Activated naive CD4-positive, alpha-beta T cell treated with anti-CD3 and anti-CD28 coated beads for 36 hours (primary cell): ENCODE measurements at regions of chr18 and their contacts with region 1.

Region 1: GRCh38 chr18:74081966-74082741 is 65.5 kb downstream of the FBXO15 start:
- DNase-seq: peak; percentile 82
- H3K4me3 Mint-ChIP-seq: peak overlapping the region; percentile 71
- H3K27ac Mint-ChIP-seq: peak overlapping the region; percentile 87
- H3K4me1 Mint-ChIP-seq: peaks cover 16% of the 10 kb centered on the region
- H3K27me3 Mint-ChIP-seq: no peaks in the 10 kb centered on the region

Region 2: GRCh38 chr18:73785271-73785670 is 296.9 kb before region 1 on chr18:
- CTCF ChIA-PET with region 1: no interaction called
- intact Hi-C with region 1: no loop called
- DNase-seq: no peak
- H3K4me3 Mint-ChIP-seq: no peak overlapping the region
- H3K27ac Mint-ChIP-seq: no peak overlapping the region
- H3K4me1 Mint-ChIP-seq: no peaks in the 10 kb centered on the region
- H3K27me3 Mint-ChIP-seq: peaks cover 5% of the 10 kb centered on the region

Region 3: DNA sequence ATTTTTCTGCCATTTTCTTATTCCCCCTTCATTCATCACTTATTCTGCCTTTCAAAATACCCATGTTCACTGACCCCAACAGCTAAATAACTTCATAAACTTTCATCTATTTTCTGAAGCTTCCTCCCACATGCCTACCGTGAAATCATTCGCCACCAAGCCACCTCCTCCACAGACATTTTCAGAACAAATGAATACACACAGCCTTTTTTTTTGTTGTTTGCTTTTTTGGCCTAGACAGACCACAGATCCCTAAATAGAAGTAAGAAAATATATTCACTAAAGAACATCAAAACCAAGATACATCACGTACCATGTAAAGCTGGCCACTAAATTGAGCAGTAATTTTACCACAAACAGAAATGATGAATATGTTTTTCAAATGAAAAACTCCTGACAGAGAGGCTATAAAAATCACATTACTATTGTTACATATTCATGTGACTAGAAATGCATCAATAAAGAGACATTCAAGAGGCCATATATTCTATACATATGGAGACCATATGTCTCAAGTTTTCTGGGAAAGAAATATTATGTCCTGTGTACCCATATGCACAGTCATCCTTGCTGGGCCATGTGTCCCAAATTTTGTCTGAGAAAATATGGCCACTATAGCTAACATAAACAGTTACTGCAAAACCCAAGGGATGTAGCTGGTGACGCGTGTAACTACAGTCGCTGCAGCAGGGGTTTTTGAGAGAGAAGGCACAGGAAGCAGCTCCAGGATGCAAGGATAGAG is 134.8 kb before region 1 on chr18:
- CTCF ChIA-PET with region 1: no interaction called
- intact Hi-C with region 1: no loop called
- DNase-seq: no peak
- H3K4me3 Mint-ChIP-seq: no peak overlapping the region
- H3K27ac Mint-ChIP-seq: no peak overlapping the region
- H3K4me1 Mint-ChIP-seq: peaks cover 2% of the 10 kb centered on the region
- H3K27me3 Mint-ChIP-seq: no peaks in the 10 kb centered on the region

Region 4: GRCh38 chr18:74063023-74063422 is 19.1 kb before region 1 on chr18:
- CTCF ChIA-PET with region 1: interaction called, 54 read pairs
- intact Hi-C with region 1: loop called (anchors 1 kb)
- DNase-seq: peak; percentile 75
- H3K4me3 Mint-ChIP-seq: peak overlapping the region; percentile 3
- H3K27ac Mint-ChIP-seq: peak overlapping the region; percentile 88
- H3K4me1 Mint-ChIP-seq: peaks cover 40% of the 10 kb centered on the region
- H3K27me3 Mint-ChIP-seq: no peaks in the 10 kb centered on the region

Region 5: DNA sequence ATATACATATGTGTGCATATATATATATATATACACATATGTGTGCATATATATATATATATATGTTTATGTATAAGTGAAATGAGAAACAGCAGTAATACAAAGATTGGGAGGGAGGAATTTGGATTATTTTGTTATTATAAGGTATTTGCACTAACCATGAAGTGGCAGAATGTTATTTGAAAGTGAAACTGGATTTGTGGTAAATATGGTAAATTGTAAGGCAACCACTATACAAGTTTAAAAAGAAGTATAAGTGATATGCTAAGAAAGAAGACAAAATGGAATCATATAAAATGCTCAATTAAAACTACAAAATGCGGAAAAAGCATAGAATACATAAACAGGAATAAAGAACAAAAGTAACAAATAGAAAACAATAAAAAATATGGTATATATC is 28.0 kb after region 1 on chr18:
- CTCF ChIA-PET with region 1: interaction called, 46 read pairs
- intact Hi-C with region 1: no loop called
- DNase-seq: no peak
- H3K4me3 Mint-ChIP-seq: no peak overlapping the region
- H3K27ac Mint-ChIP-seq: no peak overlapping the region
- H3K4me1 Mint-ChIP-seq: peaks cover 24% of the 10 kb centered on the region
- H3K27me3 Mint-ChIP-seq: no peaks in the 10 kb centered on the region

Region 6: DNA sequence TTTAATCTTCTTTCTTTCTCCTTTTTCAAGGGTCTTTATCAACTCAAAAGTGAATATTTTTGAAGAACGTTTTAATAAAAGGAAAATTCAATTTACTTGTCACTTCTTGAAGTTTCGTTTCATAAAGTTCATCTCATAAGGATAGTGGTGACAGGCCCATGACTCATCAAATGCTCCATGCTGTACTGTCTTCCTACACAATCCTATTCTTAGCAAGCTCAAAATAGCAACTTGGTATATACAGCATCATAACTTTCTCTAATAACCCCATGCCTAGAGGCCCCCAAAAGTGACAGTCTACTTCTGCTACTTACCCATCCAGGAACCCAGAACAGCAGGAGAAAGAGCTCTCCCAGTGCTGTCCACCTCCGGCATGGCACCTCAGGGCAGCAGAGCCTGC is 57.7 kb after region 1 on chr18:
- CTCF ChIA-PET with region 1: interaction called, 14 read pairs
- intact Hi-C with region 1: no loop called
- DNase-seq: peak; percentile 73
- H3K4me3 Mint-ChIP-seq: peak overlapping the region; percentile 27
- H3K27ac Mint-ChIP-seq: peak overlapping the region; percentile 88
- H3K4me1 Mint-ChIP-seq: peaks cover 42% of the 10 kb centered on the region
- H3K27me3 Mint-ChIP-seq: peaks cover 2% of the 10 kb centered on the region

Region 7: GRCh38 chr18:74163019-74163660 is 81.0 kb after region 1 on chr18:
- CTCF ChIA-PET with region 1: interaction called, 11 read pairs
- intact Hi-C with region 1: no loop called
- DNase-seq: no peak
- H3K4me3 Mint-ChIP-seq: no peak overlapping the region
- H3K27ac Mint-ChIP-seq: no peak overlapping the region
- H3K4me1 Mint-ChIP-seq: no peaks in the 10 kb centered on the region
- H3K27me3 Mint-ChIP-seq: no peaks in the 10 kb centered on the region

Region 8: DNA sequence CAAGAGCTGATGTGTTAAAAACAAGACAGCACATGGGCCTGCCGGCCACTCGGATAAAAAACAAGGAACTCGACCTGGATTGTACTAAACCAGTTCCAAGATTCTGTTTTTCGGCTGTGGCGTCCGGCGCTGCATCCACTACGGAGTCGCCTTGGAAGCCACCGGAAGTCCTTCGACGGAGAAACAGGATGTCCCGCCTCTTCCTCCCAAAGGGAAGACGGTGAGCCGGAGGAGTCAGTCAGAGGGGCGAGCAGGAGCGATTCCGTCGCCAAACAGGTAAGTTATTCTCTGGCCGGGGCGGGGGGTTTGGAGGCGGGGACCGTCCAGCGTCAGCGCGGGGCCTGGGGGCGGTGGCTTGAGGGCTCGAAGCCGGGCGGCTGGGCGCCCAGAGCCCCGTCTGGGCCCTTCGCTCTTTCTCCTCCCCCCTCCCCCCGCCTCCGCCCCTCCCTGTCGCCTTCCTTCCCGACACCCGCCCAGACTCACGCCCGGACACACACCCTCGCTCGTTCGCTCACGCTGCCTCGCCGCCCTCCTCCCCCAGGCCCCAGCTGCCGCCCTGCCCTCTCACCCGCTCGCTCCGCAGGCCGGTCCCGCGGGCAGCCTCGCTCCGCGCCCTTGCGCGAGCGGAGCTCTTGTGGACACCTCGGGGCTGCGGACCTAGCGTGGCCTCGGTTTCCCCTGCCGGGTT is 515.7 kb after region 1 on chr18 and contains the start of gene ZNF407:
- CTCF ChIA-PET with region 1: no interaction called
- intact Hi-C with region 1: loop called (anchors 5 kb)
- DNase-seq: peak; percentile 91
- H3K4me3 Mint-ChIP-seq: peak within 1 kb of the TSS; percentile 86
- H3K27ac Mint-ChIP-seq: peak within 1 kb of the TSS; percentile 98
- H3K4me1 Mint-ChIP-seq: peaks cover 38% of the 10 kb centered on the region
- H3K27me3 Mint-ChIP-seq: no peaks in the 10 kb centered on the region
- total RNA-seq, gene ZNF407: 9.8 to 9.9 TPM